Activated T-helper 1 cell treated with anti-CD3 and anti-CD28 coated beads, Interleukin-12 subunit alpha, Interleukin-12 subunit beta, Interleukin-2, Interleukin-4 antibody, amounts not matched to agents 30 ng/mL and 10 ng/mL and 1 ng/mL, durations not matched to agents 14 hours and 24 hours and 36 hours (primary cell): ENCODE measurements at regions of chr2 and their contacts with region 1.

Region 1: GRCh38 chr2:230758566-230759480 is 46.2 kb downstream of the CAB39 start:
- DNase-seq: no peak
- H3K4me3 Mint-ChIP-seq: peak overlapping the region; percentile 21
- H3K27ac Mint-ChIP-seq: peak overlapping the region; percentile 66
- H3K4me1 Mint-ChIP-seq: peaks cover 74% of the 10 kb centered on the region
- H3K27me3 Mint-ChIP-seq: no peaks in the 10 kb centered on the region

Region 2: GRCh38 chr2:230286048-230286447 is 472.8 kb before region 1 on chr2:
- intact Hi-C with region 1: no loop called
- DNase-seq: no peak
- H3K4me3 Mint-ChIP-seq: no peak overlapping the region
- H3K27ac Mint-ChIP-seq: peak overlapping the region; percentile 6
- H3K4me1 Mint-ChIP-seq: peaks cover 35% of the 10 kb centered on the region
- H3K27me3 Mint-ChIP-seq: no peaks in the 10 kb centered on the region

Region 3: GRCh38 chr2:230773039-230773773 is 14.4 kb after region 1 on chr2:
- intact Hi-C with region 1: loop called (anchors 1 kb)
- DNase-seq: no peak
- H3K4me3 Mint-ChIP-seq: no peak overlapping the region
- H3K27ac Mint-ChIP-seq: peak overlapping the region; percentile 56
- H3K4me1 Mint-ChIP-seq: peaks cover 91% of the 10 kb centered on the region
- H3K27me3 Mint-ChIP-seq: no peaks in the 10 kb centered on the region

Region 4: DNA sequence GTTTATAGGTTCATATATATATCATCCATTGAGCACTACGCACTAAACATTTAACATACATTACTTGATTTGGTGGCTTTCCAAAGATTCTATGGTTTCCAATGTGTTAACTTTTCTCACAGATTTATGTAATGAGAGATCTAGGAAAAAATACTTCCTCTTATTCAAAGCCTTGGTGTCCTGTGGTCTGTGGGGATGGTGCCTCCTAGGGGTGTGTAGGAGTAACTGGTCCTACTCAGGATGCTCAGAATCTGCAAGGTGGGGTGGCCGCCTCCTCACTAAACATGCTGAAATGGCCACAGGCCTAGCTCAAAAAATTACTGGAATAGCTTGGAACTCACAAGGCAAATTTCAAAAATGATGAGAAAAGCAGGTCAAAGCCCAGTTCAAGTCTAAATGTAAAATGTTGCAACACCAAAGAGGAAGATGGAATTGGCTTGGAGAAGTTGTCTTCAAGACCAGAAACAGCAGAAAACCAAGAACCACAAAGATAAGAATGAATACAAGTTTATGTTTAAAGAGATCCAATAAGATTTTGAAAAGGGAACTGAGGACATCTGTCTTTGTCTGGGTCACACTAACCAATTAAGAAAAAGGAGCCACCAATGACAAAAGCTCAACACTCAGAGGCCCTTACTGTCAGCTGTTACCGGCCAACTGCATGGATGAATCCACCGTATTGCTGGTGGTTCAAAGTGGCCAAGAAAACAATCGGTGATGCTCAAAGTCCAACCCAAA is 154.8 kb after region 1 on chr2:
- intact Hi-C with region 1: no loop called
- DNase-seq: no peak
- H3K4me3 Mint-ChIP-seq: no peak overlapping the region
- H3K27ac Mint-ChIP-seq: peak overlapping the region; percentile 48
- H3K4me1 Mint-ChIP-seq: peaks cover 22% of the 10 kb centered on the region
- H3K27me3 Mint-ChIP-seq: peaks cover 71% of the 10 kb centered on the region

Region 5: DNA sequence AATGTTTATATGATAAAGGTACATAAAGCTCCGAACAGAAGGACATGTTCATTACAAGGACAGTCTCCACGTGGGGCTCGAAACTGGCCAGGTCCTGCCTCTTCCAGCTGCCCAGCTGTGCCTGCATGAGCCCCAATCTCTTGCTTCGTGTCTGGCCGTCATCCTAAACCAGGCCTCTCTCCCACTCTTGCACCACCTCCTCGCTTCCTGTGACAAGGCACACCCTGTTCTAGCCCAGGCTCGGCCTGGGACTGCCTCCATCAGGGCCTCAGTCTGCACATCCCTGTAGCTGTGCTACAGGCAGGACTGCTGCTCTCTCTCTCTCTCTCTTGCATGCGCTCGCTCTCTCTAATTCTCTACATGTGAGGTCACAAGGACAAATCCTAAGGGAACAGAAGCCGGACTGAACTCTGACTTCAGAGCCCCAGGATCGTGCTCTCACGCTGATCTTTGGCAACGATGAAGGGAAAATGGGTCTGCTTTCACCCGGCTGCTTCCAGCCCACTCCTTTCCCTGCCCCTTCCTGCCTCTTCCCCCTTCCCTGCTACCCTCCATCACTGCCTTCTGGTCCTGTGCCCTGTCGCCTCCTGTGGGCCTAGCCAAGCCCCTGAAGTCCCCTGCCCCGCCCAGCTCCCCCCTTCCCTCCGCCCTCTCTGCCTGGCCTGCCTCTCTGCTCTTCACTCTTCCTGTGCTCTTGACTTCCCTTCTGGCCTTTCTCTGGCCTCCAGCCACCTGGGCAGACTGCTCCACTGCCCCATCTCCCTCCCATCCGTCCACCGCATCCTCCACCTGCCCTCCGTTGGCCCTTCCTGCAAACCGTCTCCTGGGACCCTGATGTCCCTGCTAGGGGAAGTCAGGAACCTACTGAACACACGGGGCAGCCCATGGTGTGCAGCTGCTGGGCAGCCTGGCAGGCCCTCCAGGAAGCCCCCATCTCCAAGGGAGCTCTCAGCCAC is 174.0 kb after region 1 on chr2:
- intact Hi-C with region 1: no loop called
- DNase-seq: no peak
- H3K4me3 Mint-ChIP-seq: no peak overlapping the region
- H3K27ac Mint-ChIP-seq: no peak overlapping the region
- H3K4me1 Mint-ChIP-seq: no peaks in the 10 kb centered on the region
- H3K27me3 Mint-ChIP-seq: peaks cover 29% of the 10 kb centered on the region